Calu3 (cell line): ENCODE measurements at regions of chr1 and their contacts with region 1.

Region 1: GRCh38 chr1:238951809-238952208 is 434.6 kb upstream of the CHRM3 start:
- DNase-seq: peak; percentile 63
- H3K4me3 Mint-ChIP-seq: no peak overlapping the region
- H3K27ac Mint-ChIP-seq: peak overlapping the region; percentile 62
- H3K4me1 Mint-ChIP-seq: peaks cover 16% of the 10 kb centered on the region
- H3K27me3 Mint-ChIP-seq: no peaks in the 10 kb centered on the region
- CTCF ChIP-seq: peak; percentile 61

Region 2: GRCh38 chr1:237814319-237814924 is 1137.4 kb before region 1 on chr1:
- CTCF ChIA-PET with region 1: no interaction called
- intact Hi-C with region 1: loop called (anchors 5 kb)
- DNase-seq: no peak
- H3K4me3 Mint-ChIP-seq: no peak overlapping the region
- H3K27ac Mint-ChIP-seq: no peak overlapping the region
- H3K4me1 Mint-ChIP-seq: no peaks in the 10 kb centered on the region
- H3K27me3 Mint-ChIP-seq: peaks cover 15% of the 10 kb centered on the region
- CTCF ChIP-seq: peak; percentile 49

Region 3: DNA sequence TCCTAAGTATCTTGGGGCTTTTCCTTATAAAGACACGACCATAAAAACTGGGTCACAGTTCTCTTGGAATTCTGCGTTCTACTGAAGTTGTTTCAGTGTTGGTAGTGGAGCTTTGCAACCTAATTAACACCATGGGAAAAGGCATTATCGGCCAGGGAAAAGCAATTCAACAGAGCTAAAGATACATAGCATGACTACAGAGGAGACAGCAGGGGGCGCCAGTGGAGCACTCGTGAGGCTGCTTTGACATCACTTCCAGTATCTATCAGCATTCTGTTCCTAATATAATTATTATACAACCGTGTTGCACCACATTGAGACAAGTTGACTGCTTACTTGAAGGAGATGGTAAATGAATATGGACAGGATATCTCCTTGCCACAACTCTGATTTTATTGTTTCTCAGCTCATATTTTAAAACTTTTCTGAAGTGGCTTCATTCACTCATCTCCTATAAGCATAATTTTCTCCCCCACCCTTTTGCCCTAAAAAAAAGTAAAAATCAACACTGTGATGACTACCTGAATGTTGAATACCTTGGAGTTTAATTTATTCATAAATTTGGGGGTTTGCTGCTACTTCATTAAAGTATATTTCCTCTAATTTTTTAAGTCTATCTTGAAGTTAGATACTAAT is 1100.5 kb before region 1 on chr1:
- CTCF ChIA-PET with region 1: no interaction called
- intact Hi-C with region 1: loop called (anchors 5 kb)
- DNase-seq: peak; percentile 84
- H3K4me3 Mint-ChIP-seq: no peak overlapping the region
- H3K27ac Mint-ChIP-seq: no peak overlapping the region
- H3K4me1 Mint-ChIP-seq: peaks cover 7% of the 10 kb centered on the region
- H3K27me3 Mint-ChIP-seq: no peaks in the 10 kb centered on the region
- CTCF ChIP-seq: no peak

Region 4: GRCh38 chr1:238252033-238252802 is 699.6 kb before region 1 on chr1:
- CTCF ChIA-PET with region 1: no interaction called
- intact Hi-C with region 1: loop called (anchors 1 kb)
- DNase-seq: peak; percentile 77
- H3K4me3 Mint-ChIP-seq: no peak overlapping the region
- H3K27ac Mint-ChIP-seq: peak overlapping the region; percentile 12
- H3K4me1 Mint-ChIP-seq: peaks cover 10% of the 10 kb centered on the region
- H3K27me3 Mint-ChIP-seq: no peaks in the 10 kb centered on the region
- CTCF ChIP-seq: peak; percentile 46

Region 5: GRCh38 chr1:238450976-238451375 is 500.8 kb before region 1 on chr1:
- CTCF ChIA-PET with region 1: no interaction called
- intact Hi-C with region 1: loop called (anchors 5 kb)
- DNase-seq: no peak
- H3K4me3 Mint-ChIP-seq: no peak overlapping the region
- H3K27ac Mint-ChIP-seq: no peak overlapping the region
- H3K4me1 Mint-ChIP-seq: no peaks in the 10 kb centered on the region
- H3K27me3 Mint-ChIP-seq: no peaks in the 10 kb centered on the region
- CTCF ChIP-seq: no peak

Region 6: DNA sequence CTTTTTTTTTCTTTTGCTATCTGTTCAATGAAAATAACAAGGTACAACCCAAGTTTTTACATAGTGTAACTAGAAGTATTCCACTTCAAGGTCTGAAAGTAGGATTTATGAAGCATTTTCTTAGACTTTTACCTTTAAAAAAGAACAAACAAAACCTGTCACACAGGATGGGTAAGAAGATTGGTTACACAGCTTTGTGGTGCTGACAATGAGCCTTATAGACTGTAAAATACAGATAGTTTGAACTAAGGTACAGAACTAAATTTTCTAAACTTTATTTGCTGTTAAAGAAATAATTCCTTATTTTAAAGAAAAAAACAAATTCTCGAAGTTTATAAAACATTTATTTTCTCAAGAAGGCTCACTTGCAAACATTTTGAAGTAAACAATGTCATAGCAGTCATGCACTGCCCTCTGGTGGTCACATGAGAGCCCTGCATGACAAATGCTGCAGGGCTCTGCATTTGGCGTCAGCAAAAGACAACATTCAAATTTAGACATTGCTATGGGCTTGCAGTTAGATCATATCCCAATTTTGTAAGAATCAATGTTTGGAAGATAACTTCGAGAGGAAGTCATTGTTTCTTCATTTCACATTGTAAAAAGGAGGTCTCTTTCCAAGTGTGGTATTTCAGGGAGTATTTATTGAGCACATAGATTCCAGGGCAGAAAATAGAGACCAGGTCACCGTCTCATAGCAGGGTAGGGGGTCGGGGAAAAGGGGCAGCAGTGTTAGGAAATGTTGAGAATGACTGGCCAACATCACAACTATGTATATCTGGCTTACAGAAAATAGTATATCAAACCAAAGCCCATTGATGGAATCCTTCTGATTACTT is 1024.5 kb after region 1 on chr1:
- CTCF ChIA-PET with region 1: no interaction called
- intact Hi-C with region 1: loop called (anchors 10 kb)
- DNase-seq: peak; percentile 73
- H3K4me3 Mint-ChIP-seq: no peak overlapping the region
- H3K27ac Mint-ChIP-seq: no peak overlapping the region
- H3K4me1 Mint-ChIP-seq: no peaks in the 10 kb centered on the region
- H3K27me3 Mint-ChIP-seq: peaks cover 11% of the 10 kb centered on the region
- CTCF ChIP-seq: peak; percentile 95